Activated CD4-positive, alpha-beta T cell treated with anti-CD3 and anti-CD28 coated beads for 36 hours (primary cell): ENCODE measurements at regions of chr1 and their contacts with region 1.

Region 1: DNA sequence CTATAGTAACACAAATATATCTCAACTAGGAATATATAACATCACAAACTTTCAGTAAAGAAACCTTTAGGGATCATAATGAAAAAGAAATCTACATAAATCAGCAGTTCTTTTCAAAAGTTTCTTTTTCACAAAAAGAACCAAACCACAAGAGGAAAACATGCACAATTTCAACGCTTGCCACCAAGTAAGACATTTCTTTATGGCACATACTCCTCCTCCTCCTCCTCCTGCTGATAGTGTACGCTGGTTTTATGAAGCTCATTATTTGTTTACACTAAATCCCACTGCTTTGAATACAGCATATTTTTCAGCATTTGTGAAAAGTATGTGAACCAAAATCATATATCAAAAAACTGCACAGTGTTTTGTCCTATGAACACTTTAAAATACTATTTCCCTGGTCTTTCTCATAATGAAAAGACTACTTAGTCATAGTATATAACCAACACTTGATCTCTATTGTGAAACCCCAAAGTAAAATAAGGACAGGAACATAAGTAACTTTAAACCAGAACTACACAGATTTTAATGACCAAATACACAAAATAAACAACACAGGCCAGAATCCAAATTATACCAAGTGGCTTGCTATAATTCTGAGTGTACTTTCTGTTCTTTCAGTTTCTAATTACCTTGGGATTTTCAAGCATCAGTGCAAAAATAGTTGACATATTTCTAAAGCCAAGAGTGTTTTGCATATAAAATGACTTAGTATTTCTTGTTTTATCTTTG is 184.2 kb downstream of the EIF4G3 start:
- DNase-seq: no peak
- ATAC-seq: peak; percentile 86
- H3K4me3 Mint-ChIP-seq: no peak overlapping the region
- H3K27ac Mint-ChIP-seq: peak overlapping the region; percentile 84
- H3K4me1 Mint-ChIP-seq: peaks cover 22% of the 10 kb centered on the region
- H3K27me3 Mint-ChIP-seq: no peaks in the 10 kb centered on the region

Region 2: DNA sequence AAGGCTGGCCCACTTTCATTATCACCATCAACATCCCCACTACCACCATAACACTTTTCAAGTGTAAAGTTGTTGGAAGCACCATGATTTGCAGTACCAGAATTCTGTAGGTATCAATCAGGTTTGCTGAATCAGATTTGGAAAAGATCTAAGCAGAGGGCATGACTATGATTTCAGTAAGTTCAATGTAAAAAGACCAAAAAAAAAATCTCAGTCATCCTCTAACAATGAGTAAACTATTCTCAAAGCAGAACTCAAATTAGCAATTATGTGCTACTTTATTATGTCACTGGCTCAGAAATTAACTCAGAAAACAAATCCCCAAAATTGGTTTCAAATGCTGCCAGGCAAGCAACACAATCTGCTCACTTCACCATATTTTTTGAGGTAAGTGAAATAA is 17.5 kb before region 1 on chr1:
- CTCF ChIA-PET with region 1: no interaction called
- POLR2A ChIA-PET with region 1: no interaction called
- intact Hi-C with region 1: no loop called
- DNase-seq: no peak
- ATAC-seq: peak; percentile 53
- H3K4me3 Mint-ChIP-seq: no peak overlapping the region
- H3K27ac Mint-ChIP-seq: no peak overlapping the region
- H3K4me1 Mint-ChIP-seq: peaks cover 10% of the 10 kb centered on the region
- H3K27me3 Mint-ChIP-seq: no peaks in the 10 kb centered on the region

Region 3: GRCh38 chr1:21022279-21023040 is 30.0 kb after region 1 on chr1:
- CTCF ChIA-PET with region 1: no interaction called
- POLR2A ChIA-PET with region 1: no interaction called
- intact Hi-C with region 1: loop called in 1 of 2 experiments (anchors 1 kb)
- DNase-seq: peak; percentile 57
- ATAC-seq: peak; percentile 99
- H3K4me3 Mint-ChIP-seq: peak overlapping the region; percentile 15
- H3K27ac Mint-ChIP-seq: peak overlapping the region; percentile 88
- H3K4me1 Mint-ChIP-seq: peaks cover 20% of the 10 kb centered on the region
- H3K27me3 Mint-ChIP-seq: no peaks in the 10 kb centered on the region